ENCODE measurements at regions of chr5 and their contacts with region 1.

Region 1: GRCh38 chr5:71734141-71734540 is 15.1 kb downstream of the CARTPT start:
- DNase-seq: no peak
- H3K4me3 ChIP-seq: no peak overlapping the region
- H3K4me1 ChIP-seq: no peaks in the 10 kb centered on the region
- H3K27me3 ChIP-seq: no peaks in the 10 kb centered on the region

Region 2: GRCh38 chr5:71658916-71659662 is 75.1 kb before region 1 on chr5:
- in situ Hi-C with region 1: loop called (anchors 10 kb)
- DNase-seq: no peak
- H3K4me3 ChIP-seq: no peak overlapping the region
- H3K4me1 ChIP-seq: no peaks in the 10 kb centered on the region
- H3K27me3 ChIP-seq: no peaks in the 10 kb centered on the region

Region 3: DNA sequence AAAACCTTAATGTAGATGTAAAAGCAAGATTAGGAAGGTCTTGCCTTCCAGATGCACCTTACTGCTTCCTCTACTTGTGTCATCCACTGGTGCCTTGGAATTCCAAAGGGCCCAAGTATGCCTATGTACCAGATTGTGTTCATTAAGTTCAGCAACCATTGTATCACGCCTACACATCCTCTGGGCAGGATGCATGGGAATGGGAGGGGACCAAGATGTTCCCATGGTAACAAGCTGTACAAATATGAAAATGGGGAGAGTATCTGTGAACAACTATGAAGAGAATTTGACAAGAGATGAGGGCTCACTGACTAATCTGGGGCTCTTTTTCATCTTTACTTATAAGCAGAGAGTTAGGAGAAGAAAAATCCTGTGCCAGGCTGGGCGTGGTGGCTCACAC is 235.3 kb after region 1 on chr5:
- in situ Hi-C with region 1: no loop called
- DNase-seq: no peak
- H3K4me3 ChIP-seq: no peak overlapping the region
- H3K4me1 ChIP-seq: no peaks in the 10 kb centered on the region
- H3K27me3 ChIP-seq: no peaks in the 10 kb centered on the region

Region 4: GRCh38 chr5:71996789-71997188 is 262.6 kb after region 1 on chr5:
- in situ Hi-C with region 1: no loop called
- DNase-seq: no peak
- H3K4me3 ChIP-seq: no peak overlapping the region
- H3K4me1 ChIP-seq: no peaks in the 10 kb centered on the region
- H3K27me3 ChIP-seq: no peaks in the 10 kb centered on the region; the same call in 1 of the 2 replicates

Measured in HAP-1 (cell line).